ENCODE measurements at regions of chr15 and their contacts with region 1.

Region 1: DNA sequence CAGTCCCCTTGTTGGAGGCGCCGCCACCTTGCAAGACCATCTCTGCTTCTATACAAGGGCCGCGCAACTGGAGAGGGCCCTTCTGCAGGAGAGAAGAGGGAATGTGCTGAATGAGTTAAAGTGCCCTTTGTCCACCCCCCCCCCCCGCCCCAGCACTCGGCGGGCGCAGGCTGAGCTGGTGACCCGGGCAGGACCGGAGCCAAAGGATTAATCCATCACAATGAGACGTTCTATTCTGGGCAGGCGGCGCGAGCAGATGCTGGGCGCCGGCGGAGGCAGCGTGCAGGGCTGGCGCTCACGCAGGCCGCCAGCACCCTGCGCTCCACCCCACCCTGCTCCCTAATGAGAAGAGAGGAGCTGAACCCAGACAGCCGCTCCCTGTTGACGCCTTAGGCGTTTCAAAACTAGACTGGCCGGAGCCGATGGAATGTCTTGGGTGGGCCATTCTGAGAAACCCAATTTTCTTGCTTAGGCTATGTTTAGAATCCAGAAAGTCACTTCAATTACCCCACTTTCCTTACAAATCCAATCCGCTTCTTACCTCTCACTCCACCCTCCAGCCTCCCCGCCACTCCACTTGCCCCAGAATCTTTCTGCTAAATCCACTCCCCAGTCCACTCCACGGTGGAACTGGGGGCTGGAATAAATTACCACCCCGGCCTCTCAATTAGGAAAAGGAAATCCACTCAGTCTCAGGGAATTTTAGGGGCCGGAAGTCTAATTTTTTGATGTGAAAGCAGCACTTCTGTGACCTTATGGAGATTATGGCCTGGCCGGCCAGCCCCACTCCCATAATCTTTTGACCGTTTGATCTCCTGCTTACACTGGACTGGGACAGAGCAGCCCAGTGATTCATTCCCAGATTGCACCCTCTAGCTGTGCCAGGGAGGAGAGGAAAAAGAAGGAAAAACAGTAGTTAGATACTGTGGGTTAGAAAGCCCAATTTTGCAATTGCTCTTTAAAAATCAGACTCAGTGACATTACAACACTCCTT is 32.7 kb downstream of the GJD2 start:
- DNase-seq: peak; percentile 42
- H3K4me3 ChIP-seq: no peak overlapping the region
- H3K27ac ChIP-seq: no peak overlapping the region
- H3K4me1 ChIP-seq: peaks cover 9% of the 10 kb centered on the region
- H3K27me3 ChIP-seq: peaks cover 4% of the 10 kb centered on the region
- CTCF ChIP-seq: peak in 1 of 2 donors; percentile 20

Region 2: DNA sequence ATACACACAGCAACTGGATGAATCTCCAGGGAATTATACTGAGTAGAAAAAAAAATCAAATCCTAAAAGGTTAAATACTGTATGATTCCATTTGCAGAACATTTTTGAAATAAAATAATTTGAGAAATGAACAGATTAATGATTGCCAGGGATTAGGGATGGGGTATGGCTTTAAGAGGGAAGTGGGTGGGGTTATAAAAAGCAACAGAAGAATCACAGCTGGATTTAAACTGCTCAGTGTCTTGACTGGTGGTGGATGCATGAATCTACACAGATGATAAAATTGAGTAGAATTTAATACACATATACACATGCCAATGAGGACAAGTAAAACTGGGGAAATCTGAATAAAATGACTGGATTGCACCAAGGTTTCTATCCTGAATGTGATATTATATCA is 59.0 kb before region 1 on chr15:
- CTCF ChIA-PET with region 1: no interaction called
- dilution Hi-C with region 1: loop called (anchors 5 kb)
- in situ Hi-C with region 1: no loop called
- intact Hi-C with region 1: no loop called
- DNase-seq: no peak
- H3K4me3 ChIP-seq: no peak overlapping the region
- H3K27ac ChIP-seq: no peak overlapping the region
- H3K4me1 ChIP-seq: no peaks in the 10 kb centered on the region
- H3K27me3 ChIP-seq: no peaks in the 10 kb centered on the region
- CTCF ChIP-seq: no peak

Region 3: DNA sequence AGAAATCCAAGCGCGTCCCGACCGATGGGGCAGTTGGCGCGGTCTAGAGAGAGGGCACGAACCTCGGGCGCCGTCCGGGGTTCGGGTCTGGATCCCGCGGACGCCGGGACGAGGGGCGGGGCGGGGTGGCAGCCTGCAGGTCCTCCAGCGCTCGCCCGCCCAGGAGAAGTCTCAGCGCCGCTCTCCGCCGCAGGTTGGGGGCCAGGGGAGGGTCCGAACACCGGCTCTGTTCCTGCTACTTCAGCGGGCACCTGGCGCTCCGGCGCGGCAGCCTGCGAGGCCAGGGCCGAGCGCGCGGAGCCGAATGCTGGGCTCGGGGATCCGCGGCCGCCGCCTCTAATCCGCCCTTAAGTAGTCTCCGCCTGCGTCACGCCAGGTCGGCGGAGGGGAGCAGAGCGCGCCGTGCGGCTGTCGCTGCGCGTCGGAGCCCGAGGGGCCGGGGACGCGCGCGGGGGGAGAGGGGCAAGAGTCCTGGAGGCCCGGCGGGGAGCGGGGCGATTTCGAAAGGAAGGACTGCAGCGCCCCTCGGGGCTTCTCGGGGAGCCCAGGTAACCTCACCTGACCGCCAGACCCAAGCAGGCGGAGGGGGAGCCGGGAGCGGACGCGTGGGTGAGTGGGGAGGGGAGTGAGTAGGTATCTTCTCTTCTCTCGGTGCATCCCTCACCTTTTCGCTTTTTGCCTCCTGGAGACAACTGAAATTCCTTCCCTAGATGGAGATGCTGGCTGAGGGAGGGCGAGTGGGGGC is 32.7 kb after region 1 on chr15 and contains the start of gene GJD2:
- CTCF ChIA-PET with region 1: no interaction called
- dilution Hi-C with region 1: loop called (anchors 5 kb)
- in situ Hi-C with region 1: no loop called
- intact Hi-C with region 1: no loop called
- DNase-seq: no peak
- H3K4me3 ChIP-seq: peak within 1 kb of the TSS in 2 of 3 experiments; percentile 27 to 28
- H3K27ac ChIP-seq: no peak within 1 kb of the TSS
- H3K4me1 ChIP-seq: peaks cover 7% of the 10 kb centered on the region
- H3K27me3 ChIP-seq: peaks cover 43% of the 10 kb centered on the region
- CTCF ChIP-seq: no peak
- total RNA-seq, gene GJD2: not detected